Head of caudate nucleus (tissue), 42 donors: ENCODE measurements at regions of chr9 and their contacts with region 1.

Region 1: GRCh38 chr9:83334320-83334719 is 203.9 kb downstream of the FRMD3 start:
- DNase-seq: peak; percentile 56 to 91 (median 82)

Region 2: GRCh38 chr9:83596896-83597504 is 262.7 kb after region 1 on chr9:
- intact Hi-C with region 1: loop called (anchors 10 kb)
- DNase-seq: peak in 38 of 42 donors; percentile 6 to 81 (median 55)